Naive thymus-derived CD4-positive, alpha-beta T cell (primary cell): ENCODE measurements at regions of chr6 and their contacts with region 1.

Region 1: DNA sequence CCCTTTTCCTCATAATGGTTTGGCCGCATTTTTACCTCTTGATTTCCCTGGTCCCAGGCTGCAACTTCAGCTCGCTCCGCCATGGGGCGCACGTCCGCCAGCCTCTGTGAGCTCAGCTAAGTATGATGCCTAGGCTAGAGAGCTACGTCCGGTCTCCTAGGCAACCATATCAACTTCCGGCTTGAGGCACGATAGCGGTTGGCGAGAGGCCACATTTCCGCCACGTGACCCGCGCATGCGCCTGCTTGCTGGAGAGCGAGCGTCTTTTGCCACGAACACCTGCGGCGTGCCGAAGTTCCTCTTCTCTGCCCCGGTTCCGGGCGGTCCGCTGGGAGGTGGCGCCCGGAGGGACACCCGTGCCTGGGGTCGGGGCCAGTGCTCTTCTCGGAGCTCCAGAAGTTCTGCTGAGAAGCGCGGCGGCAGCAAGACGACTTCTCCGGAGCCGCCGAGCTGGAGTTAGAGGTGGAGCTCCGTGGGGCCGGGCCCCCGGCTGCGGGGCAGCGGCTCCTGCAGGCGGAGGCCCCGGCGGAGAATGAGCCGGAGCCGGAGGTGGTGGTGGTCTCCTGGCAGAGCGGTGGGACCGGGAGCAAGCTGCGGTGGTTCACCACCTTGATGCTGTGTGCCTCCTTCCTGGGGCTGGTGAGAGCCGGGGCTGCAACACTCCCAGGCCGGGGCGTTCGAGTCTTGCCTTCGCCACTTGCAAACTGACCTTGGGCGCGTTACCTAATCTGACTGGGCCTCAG is 172.0 kb downstream of the SLC16A10 start:
- DNase-seq: peak; percentile 98 to 99 (median 99)
- ATAC-seq: peak; percentile 99
- H3K4me3 ChIP-seq: peak overlapping the region; percentile 89
- H3K4me3 Mint-ChIP-seq: peak overlapping the region; percentile 75 to 90 (median 86)
- H3K27ac ChIP-seq: peak overlapping the region; percentile 87
- H3K27ac Mint-ChIP-seq: peak overlapping the region; percentile 83 to 97 (median 92)
- H3K4me1 ChIP-seq: peaks cover 6 to 17% of the 10 kb centered on the region in 2 donors
- H3K4me1 Mint-ChIP-seq: peaks cover 12 to 37% (median 30%) of the 10 kb centered on the region in 7 donors
- H3K27me3 ChIP-seq: no peaks in the 10 kb centered on the region
- H3K27me3 Mint-ChIP-seq: peaks cover 0 to 18% (median 0%) of the 10 kb centered on the region in 5 donors

Region 2: GRCh38 chr6:110233770-110234374 is 1025.4 kb before region 1 on chr6:
- CTCF ChIA-PET with region 1: no interaction called
- POLR2A ChIA-PET with region 1: no interaction called
- intact Hi-C with region 1: no loop called
- DNase-seq: peak in 2 of 9 donors; percentile 1 to 8
- ATAC-seq: peak; percentile 34
- H3K4me3 ChIP-seq: no peak overlapping the region
- H3K4me3 Mint-ChIP-seq: no peak overlapping the region
- H3K27ac ChIP-seq: no peak overlapping the region
- H3K27ac Mint-ChIP-seq: peak overlapping the region in 3 of 9 donors; percentile 28 to 67 (median 62)
- H3K4me1 ChIP-seq: peaks cover 0 to 5% of the 10 kb centered on the region in 2 donors
- H3K4me1 Mint-ChIP-seq: peaks cover 3 to 19% (median 7%) of the 10 kb centered on the region in 7 donors
- H3K27me3 ChIP-seq: no peaks in the 10 kb centered on the region
- H3K27me3 Mint-ChIP-seq: no peaks in the 10 kb centered on the region

Region 3: GRCh38 chr6:110815217-110816109 is 443.8 kb before region 1 on chr6 and contains the start of gene CDK19:
- CTCF ChIA-PET with region 1: no interaction called
- POLR2A ChIA-PET with region 1: interaction called, 4 read pairs
- intact Hi-C with region 1: loop called (anchors 1 to 5 kb)
- DNase-seq: peak; percentile 94 to 99 (median 99)
- ATAC-seq: peak; percentile 87
- H3K4me3 ChIP-seq: peak within 1 kb of the TSS; percentile 97
- H3K4me3 Mint-ChIP-seq: peak within 1 kb of the TSS; percentile 94 to 100 (median 98)
- H3K27ac ChIP-seq: peak within 1 kb of the TSS; percentile 89
- H3K27ac Mint-ChIP-seq: peak within 1 kb of the TSS; percentile 89 to 100 (median 99)
- H3K4me1 ChIP-seq: peaks cover 11 to 15% of the 10 kb centered on the region in 2 donors
- H3K4me1 Mint-ChIP-seq: peaks cover 14 to 46% (median 26%) of the 10 kb centered on the region in 7 donors
- H3K27me3 ChIP-seq: no peaks in the 10 kb centered on the region
- H3K27me3 Mint-ChIP-seq: no peaks in the 10 kb centered on the region
- total RNA-seq, gene CDK19: 11.3 to 24.4 (median 21.0) TPM

Region 4: DNA sequence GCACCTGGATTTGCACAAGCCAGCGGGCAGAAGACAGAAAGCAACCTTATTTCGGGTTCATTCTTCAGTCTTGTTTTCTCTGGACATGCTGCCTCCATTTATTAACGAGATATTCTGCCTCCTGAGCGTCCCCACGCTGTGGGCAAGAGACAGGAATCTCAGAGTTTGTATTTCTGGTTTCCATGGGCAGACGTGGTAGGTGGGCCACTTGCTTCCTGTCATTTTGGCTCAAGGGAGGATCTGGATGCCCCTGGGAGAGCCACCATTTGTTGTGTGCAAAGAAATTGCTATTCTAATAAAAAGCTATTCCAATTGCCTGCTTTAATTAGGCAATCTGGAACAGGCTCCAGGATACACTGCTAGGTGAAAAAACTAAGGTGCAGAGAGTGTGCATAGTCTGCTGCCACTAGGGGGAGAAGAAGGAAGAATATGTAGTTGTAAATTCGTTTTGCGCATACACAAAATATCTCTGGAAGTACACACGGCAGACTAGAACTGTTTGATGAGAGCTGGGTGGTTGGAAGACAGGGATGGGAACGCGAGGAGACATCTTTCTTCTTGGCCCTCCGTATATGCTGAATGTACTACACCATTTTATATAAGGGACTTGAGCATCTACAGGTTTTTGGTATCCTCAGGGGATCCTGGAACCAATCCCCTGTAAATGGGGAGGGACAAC is 202.0 kb before region 1 on chr6:
- CTCF ChIA-PET with region 1: interaction called, 4 read pairs
- POLR2A ChIA-PET with region 1: no interaction called
- intact Hi-C with region 1: loop called in 1 of 2 experiments (anchors 1 kb)
- DNase-seq: peak in 6 of 9 donors; percentile 22 to 54 (median 40)
- ATAC-seq: peak; percentile 76
- H3K4me3 ChIP-seq: no peak overlapping the region
- H3K4me3 Mint-ChIP-seq: peak overlapping the region in 1 of 10 donors; percentile 4
- H3K27ac ChIP-seq: no peak overlapping the region
- H3K27ac Mint-ChIP-seq: no peak overlapping the region
- H3K4me1 ChIP-seq: no peaks in the 10 kb centered on the region
- H3K4me1 Mint-ChIP-seq: peaks cover 0 to 6% (median 2%) of the 10 kb centered on the region in 7 donors
- H3K27me3 ChIP-seq: no peaks in the 10 kb centered on the region
- H3K27me3 Mint-ChIP-seq: peaks cover 0 to 6% (median 0%) of the 10 kb centered on the region in 5 donors

Region 5: GRCh38 chr6:111354758-111355555 is 95.7 kb after region 1 on chr6:
- CTCF ChIA-PET with region 1: no interaction called
- POLR2A ChIA-PET with region 1: no interaction called
- intact Hi-C with region 1: no loop called
- DNase-seq: no peak
- ATAC-seq: peak; percentile 32
- H3K4me3 ChIP-seq: no peak overlapping the region
- H3K4me3 Mint-ChIP-seq: no peak overlapping the region
- H3K27ac ChIP-seq: no peak overlapping the region
- H3K27ac Mint-ChIP-seq: peak overlapping the region in 1 of 9 donors; percentile 71
- H3K4me1 ChIP-seq: no peaks in the 10 kb centered on the region
- H3K4me1 Mint-ChIP-seq: no peaks in the 10 kb centered on the region
- H3K27me3 ChIP-seq: no peaks in the 10 kb centered on the region
- H3K27me3 Mint-ChIP-seq: no peaks in the 10 kb centered on the region

Region 6: GRCh38 chr6:111382476-111383300 is 123.4 kb after region 1 on chr6:
- CTCF ChIA-PET with region 1: no interaction called
- POLR2A ChIA-PET with region 1: no interaction called
- intact Hi-C with region 1: no loop called
- DNase-seq: no peak
- ATAC-seq: no peak
- H3K4me3 ChIP-seq: no peak overlapping the region
- H3K4me3 Mint-ChIP-seq: no peak overlapping the region
- H3K27ac ChIP-seq: no peak overlapping the region
- H3K27ac Mint-ChIP-seq: peak overlapping the region in 1 of 9 donors; percentile 64
- H3K4me1 ChIP-seq: no peaks in the 10 kb centered on the region
- H3K4me1 Mint-ChIP-seq: peaks cover 0 to 13% (median 0%) of the 10 kb centered on the region in 7 donors
- H3K27me3 ChIP-seq: no peaks in the 10 kb centered on the region
- H3K27me3 Mint-ChIP-seq: no peaks in the 10 kb centered on the region

Region 7: GRCh38 chr6:111483736-111484632 is 224.7 kb after region 1 on chr6:
- CTCF ChIA-PET with region 1: interaction called, 46 read pairs
- POLR2A ChIA-PET with region 1: interaction called, 26 read pairs
- intact Hi-C with region 1: loop called (anchors 1 kb)
- DNase-seq: peak in 6 of 9 donors; percentile 80 to 89 (median 86)
- ATAC-seq: peak; percentile 79
- H3K4me3 ChIP-seq: peak overlapping the region; percentile 93
- H3K4me3 Mint-ChIP-seq: peak overlapping the region; percentile 96 to 100 (median 98)
- H3K27ac ChIP-seq: peak overlapping the region; percentile 99
- H3K27ac Mint-ChIP-seq: peak overlapping the region; percentile 95 to 99 (median 99)
- H3K4me1 ChIP-seq: peaks cover 14 to 29% of the 10 kb centered on the region in 2 donors
- H3K4me1 Mint-ChIP-seq: peaks cover 28 to 59% (median 52%) of the 10 kb centered on the region in 7 donors
- H3K27me3 ChIP-seq: no peaks in the 10 kb centered on the region
- H3K27me3 Mint-ChIP-seq: peaks cover 0 to 3% (median 0%) of the 10 kb centered on the region in 5 donors

Region 8: GRCh38 chr6:111683749-111684267 is 424.5 kb after region 1 on chr6:
- CTCF ChIA-PET with region 1: no interaction called
- POLR2A ChIA-PET with region 1: no interaction called
- intact Hi-C with region 1: loop called in 1 of 2 experiments (anchors 10 kb)
- DNase-seq: peak in 2 of 9 donors; percentile 18 to 19
- ATAC-seq: no peak
- H3K4me3 ChIP-seq: no peak overlapping the region
- H3K4me3 Mint-ChIP-seq: peak overlapping the region in 8 of 10 donors; percentile 7 to 70 (median 58)
- H3K27ac ChIP-seq: peak overlapping the region; percentile 46
- H3K27ac Mint-ChIP-seq: peak overlapping the region in 8 of 9 donors; percentile 78 to 94 (median 86)
- H3K4me1 ChIP-seq: peaks cover 34% of the 10 kb centered on the region in 2 donors
- H3K4me1 Mint-ChIP-seq: peaks cover 27 to 93% (median 84%) of the 10 kb centered on the region in 7 donors
- H3K27me3 ChIP-seq: no peaks in the 10 kb centered on the region
- H3K27me3 Mint-ChIP-seq: no peaks in the 10 kb centered on the region

Region 9: GRCh38 chr6:112010328-112010727 is 751.1 kb after region 1 on chr6:
- CTCF ChIA-PET with region 1: interaction called, 5 read pairs
- POLR2A ChIA-PET with region 1: no interaction called
- intact Hi-C with region 1: loop called in 1 of 2 experiments (anchors 1 kb)
- DNase-seq: peak in 5 of 9 donors; percentile 37 to 57 (median 45)
- ATAC-seq: peak; percentile 56
- H3K4me3 ChIP-seq: no peak overlapping the region
- H3K4me3 Mint-ChIP-seq: peak overlapping the region in 1 of 10 donors; percentile 9
- H3K27ac ChIP-seq: no peak overlapping the region
- H3K27ac Mint-ChIP-seq: peak overlapping the region in 7 of 9 donors; percentile 0 to 41 (median 7)
- H3K4me1 ChIP-seq: no peaks in the 10 kb centered on the region
- H3K4me1 Mint-ChIP-seq: peaks cover 6 to 22% (median 14%) of the 10 kb centered on the region in 7 donors
- H3K27me3 ChIP-seq: no peaks in the 10 kb centered on the region
- H3K27me3 Mint-ChIP-seq: no peaks in the 10 kb centered on the region

Region 10: GRCh38 chr6:112163295-112164257 is 904.3 kb after region 1 on chr6:
- CTCF ChIA-PET with region 1: interaction called, 6 read pairs
- POLR2A ChIA-PET with region 1: no interaction called
- intact Hi-C with region 1: loop called (anchors 1 to 2 kb)
- DNase-seq: peak; percentile 43 to 81 (median 64)
- ATAC-seq: peak; percentile 97
- H3K4me3 ChIP-seq: no peak overlapping the region
- H3K4me3 Mint-ChIP-seq: peak overlapping the region; percentile 49 to 88 (median 79)
- H3K27ac ChIP-seq: no peak overlapping the region
- H3K27ac Mint-ChIP-seq: peak overlapping the region in 7 of 9 donors; percentile 10 to 79 (median 48)
- H3K4me1 ChIP-seq: peaks cover 3 to 7% of the 10 kb centered on the region in 2 donors
- H3K4me1 Mint-ChIP-seq: peaks cover 9 to 18% (median 14%) of the 10 kb centered on the region in 7 donors
- H3K27me3 ChIP-seq: no peaks in the 10 kb centered on the region
- H3K27me3 Mint-ChIP-seq: peaks cover 25 to 60% (median 48%) of the 10 kb centered on the region in 5 donors